ENCODE measurements at regions of chr17 and their contacts with region 1.

Region 1: DNA sequence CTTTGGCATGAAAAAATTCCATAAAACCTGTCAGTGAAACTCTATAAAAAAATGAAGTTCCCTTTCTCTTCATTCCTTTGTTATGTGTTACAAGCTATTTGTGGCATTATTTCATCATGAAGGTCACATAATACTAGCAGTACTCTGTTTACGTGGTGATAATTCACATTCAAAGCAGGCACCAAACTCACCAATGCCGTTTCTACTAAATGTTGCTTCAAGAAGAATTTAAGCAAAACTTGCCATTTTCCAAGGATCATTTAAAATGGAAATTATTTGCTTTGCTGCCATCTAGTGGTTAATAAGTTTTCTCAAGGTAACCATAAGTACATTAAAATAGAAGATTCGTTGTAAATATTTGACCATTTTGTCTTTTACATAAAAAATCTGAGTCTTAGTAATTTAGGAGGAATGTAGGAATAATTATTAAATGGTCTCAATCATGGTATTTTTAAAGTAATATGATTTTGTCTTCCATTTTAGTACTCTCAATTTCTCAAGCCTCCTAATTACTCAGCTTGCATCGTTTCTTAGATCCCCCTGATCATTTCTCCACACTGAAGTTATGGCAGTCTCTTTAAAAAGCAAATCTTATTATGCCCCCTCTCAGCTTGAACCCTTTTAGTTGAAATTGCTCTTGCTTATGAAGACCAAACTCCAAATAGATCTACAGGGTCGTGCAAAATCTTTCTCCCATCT is 80.8 kb downstream of the OMG start:
- DNase-seq: no peak
- ATAC-seq: no peak
- H3K4me3 ChIP-seq: no peak overlapping the region
- H3K27ac ChIP-seq: no peak overlapping the region
- H3K4me1 ChIP-seq: no peaks in the 10 kb centered on the region
- H3K27me3 ChIP-seq: no peaks in the 10 kb centered on the region
- CTCF ChIP-seq: peak; percentile 62

Region 2: DNA sequence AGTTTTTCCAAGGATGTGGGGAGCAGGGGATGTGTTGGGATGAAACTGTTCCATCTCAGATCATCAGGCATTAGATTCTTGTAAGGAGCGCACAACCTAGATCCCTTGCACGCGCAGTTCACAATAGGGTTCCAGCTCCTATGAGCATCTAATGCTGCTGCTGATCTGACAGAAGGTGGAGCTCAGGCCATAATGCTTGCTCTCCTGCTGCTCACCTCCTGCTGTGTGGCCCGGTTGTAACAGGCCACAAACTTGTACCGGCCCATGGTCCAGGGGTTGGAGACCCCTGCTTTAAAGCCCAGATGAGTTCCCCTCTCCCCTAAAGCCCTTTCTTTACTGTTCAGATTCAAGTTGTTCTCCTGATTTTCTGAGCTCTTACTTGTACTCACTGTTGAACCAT is 200.6 kb before region 1 on chr17:
- intact Hi-C with region 1: loop called (anchors 10 kb)
- DNase-seq: no peak
- ATAC-seq: no peak
- H3K4me3 ChIP-seq: no peak overlapping the region
- H3K27ac ChIP-seq: no peak overlapping the region
- H3K4me1 ChIP-seq: no peaks in the 10 kb centered on the region
- H3K27me3 ChIP-seq: no peaks in the 10 kb centered on the region
- CTCF ChIP-seq: no peak

Region 3: GRCh38 chr17:31274252-31274651 is 58.0 kb after region 1 on chr17:
- intact Hi-C with region 1: no loop called
- DNase-seq: no peak
- ATAC-seq: peak; percentile 80 to 81
- H3K4me3 ChIP-seq: no peak overlapping the region
- H3K27ac ChIP-seq: peak overlapping the region; percentile 44
- H3K4me1 ChIP-seq: peaks cover 29% of the 10 kb centered on the region
- H3K27me3 ChIP-seq: no peaks in the 10 kb centered on the region
- CTCF ChIP-seq: no peak

Region 4: DNA sequence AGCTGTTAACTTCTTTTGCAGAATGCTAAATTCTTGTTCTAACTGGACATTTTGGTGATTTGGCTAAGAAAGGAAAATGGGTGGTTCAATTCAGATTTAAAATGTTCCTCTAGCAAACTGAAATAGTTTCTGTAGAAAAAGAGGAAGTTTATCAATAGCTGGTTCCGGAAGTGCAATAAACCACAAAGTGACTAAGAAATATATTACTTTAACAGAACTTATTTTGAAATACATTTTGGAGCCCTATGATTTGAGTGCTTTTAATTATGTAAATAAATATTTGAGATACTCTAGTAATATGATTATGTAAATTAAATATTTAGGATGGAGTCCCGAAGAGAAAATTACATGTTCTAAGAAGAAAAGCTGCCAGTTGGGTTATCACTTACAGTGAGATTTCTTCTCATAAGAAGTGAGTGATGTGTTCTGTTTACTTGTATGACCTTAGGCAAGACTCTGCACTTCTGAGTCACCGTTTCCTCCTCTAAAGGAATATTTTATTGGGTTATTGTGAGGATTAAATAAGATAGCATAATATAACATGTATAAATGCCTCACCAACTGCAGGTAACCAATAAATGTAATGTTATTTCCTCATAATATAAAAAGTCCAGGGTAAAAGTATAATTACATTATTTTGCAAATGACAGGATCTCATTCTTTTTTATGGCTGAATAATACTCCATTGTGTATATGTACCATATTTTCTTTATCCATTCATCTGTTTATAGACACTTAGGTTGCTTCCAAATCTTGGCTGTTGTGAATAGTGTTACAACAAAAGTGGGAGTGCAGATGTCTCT is 98.0 kb after region 1 on chr17 and contains the start of gene EVI2B:
- intact Hi-C with region 1: no loop called
- DNase-seq: no peak
- ATAC-seq: peak; percentile 63 to 66
- H3K4me3 ChIP-seq: peak within 1 kb of the TSS; percentile 42
- H3K27ac ChIP-seq: peak within 1 kb of the TSS; percentile 80
- H3K4me1 ChIP-seq: peaks cover 18% of the 10 kb centered on the region
- H3K27me3 ChIP-seq: no peaks in the 10 kb centered on the region
- CTCF ChIP-seq: no peak
- total RNA-seq, gene EVI2B: 130 TPM